Dendritic cell treated with granulocyte-macrophage colony-stimulating factor and Interleukin-4, amounts not matched to agents 40 ng/mL and 50 ng/mL, for 4 days (primary cell): ENCODE measurements at regions of chr6 and their contacts with region 1.

Region 1: GRCh38 chr6:117976030-117976651 is 69.1 kb downstream of the SLC35F1 start:
- H3K4me3 Mint-ChIP-seq: no peak overlapping the region
- H3K27ac Mint-ChIP-seq: no peak overlapping the region
- H3K4me1 Mint-ChIP-seq: no peaks in the 10 kb centered on the region
- H3K27me3 Mint-ChIP-seq: no peaks in the 10 kb centered on the region

Region 2: GRCh38 chr6:118580585-118581419 is 604.7 kb after region 1 on chr6:
- intact Hi-C with region 1: loop called (anchors 2 kb)
- H3K4me3 Mint-ChIP-seq: peak overlapping the region; percentile 26
- H3K27ac Mint-ChIP-seq: peak overlapping the region; percentile 72
- H3K4me1 Mint-ChIP-seq: peaks cover 41% of the 10 kb centered on the region
- H3K27me3 Mint-ChIP-seq: no peaks in the 10 kb centered on the region

Region 3: GRCh38 chr6:118618679-118619377 is 642.7 kb after region 1 on chr6:
- intact Hi-C with region 1: loop called (anchors 5 kb)
- H3K4me3 Mint-ChIP-seq: no peak overlapping the region
- H3K27ac Mint-ChIP-seq: no peak overlapping the region
- H3K4me1 Mint-ChIP-seq: peaks cover 17% of the 10 kb centered on the region
- H3K27me3 Mint-ChIP-seq: no peaks in the 10 kb centered on the region